ENCODE measurements at regions of chr14 and their contacts with region 1.

Region 1: DNA sequence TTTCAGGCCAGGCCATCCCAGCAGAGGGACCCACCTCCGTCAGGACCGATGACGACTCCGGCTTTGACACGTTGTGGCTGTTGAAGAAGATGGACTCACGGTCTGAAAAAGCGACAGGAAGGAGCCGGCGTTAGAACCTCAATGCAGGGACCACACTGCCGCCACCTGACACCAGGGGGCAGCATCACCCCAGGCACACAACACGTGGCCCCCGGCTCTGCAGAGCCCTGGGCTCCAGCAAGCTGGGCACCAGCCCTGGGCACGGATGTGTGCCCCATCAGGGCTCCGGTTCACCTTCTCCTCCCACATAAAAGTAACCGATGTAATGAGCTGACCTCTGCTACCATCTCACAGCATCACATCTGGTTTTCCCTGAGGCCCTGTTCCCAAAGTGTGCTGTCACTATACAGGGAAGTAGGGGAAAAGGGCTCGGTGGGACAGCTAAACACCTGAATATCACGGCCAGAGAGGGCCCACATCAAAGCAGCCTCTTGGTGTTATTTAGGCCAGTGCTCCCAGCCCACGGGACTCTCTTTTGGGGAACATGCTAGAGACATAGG is 29.0 kb downstream of the CHGA start:
- DNase-seq: peak; percentile 36 to 67
- H3K4me3 ChIP-seq: peak overlapping the region in 1 of 3 donors; percentile 9
- H3K27ac ChIP-seq: no peak overlapping the region
- H3K4me1 ChIP-seq: no peaks in the 10 kb centered on the region
- H3K27me3 ChIP-seq: no peaks in the 10 kb centered on the region
- CTCF ChIP-seq: peak; percentile 69 to 91 (median 89)
- POLR2A ChIP-seq: no peak

Region 2: GRCh38 chr14:93033983-93034670 is 82.1 kb after region 1 on chr14:
- intact Hi-C with region 1: loop called (anchors 10 kb)
- DNase-seq: no peak
- H3K4me3 ChIP-seq: no peak overlapping the region
- H3K27ac ChIP-seq: no peak overlapping the region
- H3K4me1 ChIP-seq: peaks cover 0 to 13% of the 10 kb centered on the region in 2 donors
- H3K27me3 ChIP-seq: no peaks in the 10 kb centered on the region
- CTCF ChIP-seq: no peak
- POLR2A ChIP-seq: no peak

Region 3: DNA sequence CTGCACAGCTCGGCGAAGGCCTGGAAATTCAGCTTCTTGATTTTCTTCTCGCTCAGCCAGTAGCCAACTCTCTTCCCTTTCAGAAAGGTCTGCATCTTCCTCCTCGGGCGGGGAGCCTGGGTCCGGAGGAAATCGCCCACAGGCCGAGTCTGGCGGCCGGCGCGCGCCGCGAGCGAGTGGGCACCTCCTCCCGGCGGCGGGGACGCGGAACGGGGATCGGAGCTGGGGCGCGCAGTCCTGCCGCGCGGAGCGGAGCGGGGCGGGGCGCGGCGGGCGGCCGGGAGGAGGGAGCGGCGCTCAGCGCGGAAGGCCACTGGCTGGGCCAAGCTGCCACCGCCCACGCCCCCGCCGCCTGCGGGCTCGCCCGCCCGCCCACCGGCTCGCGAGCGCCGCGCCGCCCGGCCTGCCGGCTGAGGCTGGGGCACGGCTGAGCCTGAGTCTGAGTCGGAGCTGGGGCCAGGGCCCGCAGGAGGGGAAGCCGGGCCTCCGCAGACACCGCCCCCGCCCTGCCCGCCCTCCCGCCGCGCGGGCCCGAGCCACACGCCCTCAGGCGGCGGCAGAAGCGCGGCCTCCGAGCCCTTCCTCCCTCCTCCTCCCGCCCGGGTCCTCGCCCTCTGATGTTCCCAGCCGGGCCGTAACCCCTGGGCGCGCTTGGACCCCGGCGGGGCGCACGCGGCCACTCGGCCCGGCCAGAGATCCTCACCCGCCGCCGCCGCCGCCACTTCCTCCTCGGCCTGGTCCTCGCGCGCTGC is 163.3 kb after region 1 on chr14:
- intact Hi-C with region 1: loop called (anchors 10 kb)
- DNase-seq: peak; percentile 70 to 79
- H3K4me3 ChIP-seq: peak overlapping the region; percentile 70 to 91 (median 79)
- H3K27ac ChIP-seq: peak overlapping the region; percentile 95 to 100
- H3K4me1 ChIP-seq: peaks cover 0 to 12% of the 10 kb centered on the region in 2 donors
- H3K27me3 ChIP-seq: no peaks in the 10 kb centered on the region
- CTCF ChIP-seq: peak in 1 of 3 donors; percentile 8
- POLR2A ChIP-seq: no peak

Measured in breast epithelium (tissue), 4 donors.